Activated T-helper 2 cell treated with anti-CD3 and anti-CD28 coated beads, Interferon-gamma antibody, Interleukin-2, Interleukin-4, amounts not matched to agents 10 μg/mL and 5 μg/mL and 100 μg/mL, durations not matched to agents 14 hours and 24 hours and 36 hours (primary cell): ENCODE measurements at regions of chr2 and their contacts with region 1.

Region 1: DNA sequence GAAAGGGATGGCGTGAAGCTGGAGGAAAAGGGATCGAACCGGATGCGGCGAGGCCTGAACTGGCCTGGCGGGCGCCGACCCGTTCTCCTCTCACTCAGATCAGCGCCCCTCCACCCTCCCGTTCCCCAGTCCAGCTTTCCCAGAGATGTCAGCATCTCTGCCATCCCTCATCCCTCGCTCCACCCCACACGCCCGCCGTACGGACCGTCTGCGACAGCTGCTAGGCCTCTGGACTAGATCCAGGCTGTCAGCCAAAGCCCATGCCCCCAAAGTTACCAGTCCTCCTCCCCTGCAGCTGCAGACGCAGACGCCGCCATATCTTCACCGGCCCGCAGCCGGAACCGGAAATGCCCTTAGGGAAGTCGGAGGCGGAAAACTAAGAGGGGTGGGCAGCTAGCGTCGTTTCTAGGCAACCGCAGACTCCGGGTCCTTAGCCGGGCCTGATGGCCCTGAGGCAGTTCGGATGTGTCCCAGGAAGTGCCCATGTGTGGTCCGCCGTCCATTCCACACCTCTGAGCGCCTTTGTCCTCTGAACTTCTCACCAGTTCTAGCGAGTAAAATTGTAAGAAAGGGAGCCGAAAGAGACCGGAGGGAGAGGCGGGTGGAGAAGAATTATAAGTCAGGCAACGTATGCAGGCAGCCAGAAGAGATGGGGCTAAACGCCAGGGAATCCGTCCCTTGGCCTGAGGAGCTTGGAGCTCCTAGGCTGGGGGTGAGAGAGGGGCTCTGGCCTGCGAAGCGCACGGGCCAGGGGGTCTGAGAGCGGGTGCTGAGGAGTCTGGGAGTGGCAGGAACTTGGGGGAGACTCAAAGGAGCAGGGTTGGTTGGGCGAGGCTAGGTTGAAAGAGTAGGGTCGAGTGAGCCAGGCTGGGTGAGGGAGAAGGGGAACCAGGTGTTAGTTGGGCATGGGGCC is at the starts of genes RNF25 and STK36:
- DNase-seq: peak; percentile 75
- H3K4me3 Mint-ChIP-seq: peak within 1 kb of the TSS; percentile 92
- H3K27ac Mint-ChIP-seq: peak within 1 kb of the TSS; percentile 86
- H3K4me1 Mint-ChIP-seq: peaks cover 21% of the 10 kb centered on the region
- H3K27me3 Mint-ChIP-seq: no peaks in the 10 kb centered on the region
- total RNA-seq, gene RNF25: 21.6 and 25.8 TPM in 2 replicates
- total RNA-seq, gene STK36: 14.4 and 17.9 TPM in 2 replicates

Region 2: DNA sequence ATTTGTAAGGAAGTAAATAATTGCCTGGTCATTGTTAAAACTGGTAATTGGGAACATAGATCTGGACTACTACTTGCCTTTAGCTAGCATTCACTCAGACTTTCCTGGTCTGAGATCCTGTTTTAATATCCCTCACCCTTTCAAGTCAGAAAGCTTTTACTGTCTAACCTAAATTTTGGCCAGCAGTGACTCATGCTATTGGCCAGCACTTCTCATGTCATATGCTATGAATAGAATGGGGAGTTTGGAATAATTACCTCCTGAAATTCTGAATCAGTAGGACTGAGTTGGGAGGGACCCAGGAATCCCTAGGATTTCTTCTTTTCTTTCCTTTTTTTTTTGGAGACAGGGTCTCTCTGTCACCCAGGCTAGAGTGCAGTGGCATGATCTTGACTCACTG is 19.3 kb after region 1 on chr2:
- intact Hi-C with region 1: loop called (anchors 2 kb)
- DNase-seq: no peak
- H3K4me3 Mint-ChIP-seq: no peak overlapping the region
- H3K27ac Mint-ChIP-seq: no peak overlapping the region
- H3K4me1 Mint-ChIP-seq: peaks cover 6% of the 10 kb centered on the region
- H3K27me3 Mint-ChIP-seq: no peaks in the 10 kb centered on the region

Region 3: GRCh38 chr2:218852911-218853667 is 181.2 kb after region 1 on chr2:
- intact Hi-C with region 1: loop called (anchors 5 kb)
- DNase-seq: peak; percentile 31
- H3K4me3 Mint-ChIP-seq: no peak overlapping the region
- H3K27ac Mint-ChIP-seq: no peak overlapping the region
- H3K4me1 Mint-ChIP-seq: peaks cover 7% of the 10 kb centered on the region
- H3K27me3 Mint-ChIP-seq: peaks cover 55% of the 10 kb centered on the region